ENCODE measurements at regions of chr13 and their contacts with region 1.

Region 1: DNA sequence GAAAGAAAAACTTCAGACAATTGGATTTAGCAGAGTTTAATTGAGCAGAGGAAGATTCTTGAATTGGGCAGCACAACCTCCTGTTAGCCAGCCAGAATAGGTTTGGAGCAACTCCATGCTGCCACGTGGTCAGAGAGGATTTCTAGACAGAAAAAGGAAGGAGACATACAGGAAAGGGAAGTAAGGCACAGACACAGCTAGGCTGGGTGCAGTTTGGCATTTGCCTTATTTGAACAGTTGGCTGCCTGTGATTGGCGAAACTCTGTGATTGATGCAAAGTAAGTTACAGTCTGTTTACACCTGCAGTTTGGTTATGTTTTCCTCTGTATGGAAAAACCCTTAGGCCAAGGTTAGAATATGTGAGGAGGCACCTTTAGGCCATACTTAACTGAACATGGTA is 85.8 kb upstream of the SPATA13 start:
- DNase-seq: peak in 4 of 6 donors; percentile 51 to 70 (median 52)
- ATAC-seq: peak; percentile 60 to 65 (median 62)
- H3K4me3 ChIP-seq: no peak overlapping the region
- H3K27ac ChIP-seq: peak overlapping the region; percentile 65 to 92 (median 78)
- H3K4me1 ChIP-seq: peaks cover 19 to 28% (median 27%) of the 10 kb centered on the region in 3 donors
- H3K27me3 ChIP-seq: no peaks in the 10 kb centered on the region
- CTCF ChIP-seq: no peak

Region 2: DNA sequence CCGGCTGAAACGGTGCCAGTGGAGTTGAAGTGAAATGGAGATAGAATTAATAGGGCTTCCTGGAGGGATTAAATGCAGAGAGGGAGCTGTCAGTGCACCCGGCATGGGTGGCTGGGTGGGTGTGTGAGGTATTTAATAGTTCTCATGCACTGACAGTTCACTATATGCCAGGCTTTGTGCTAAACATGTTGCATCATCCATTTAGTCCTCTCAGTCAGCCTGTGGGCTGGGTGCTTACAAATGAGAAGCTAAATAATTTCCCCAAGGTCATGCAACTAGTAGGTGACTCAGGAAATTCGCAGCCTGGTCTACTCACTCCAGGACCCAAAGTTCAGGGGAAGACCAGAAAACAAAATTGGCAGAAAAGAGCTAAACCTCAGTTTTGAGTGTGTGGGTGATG is 22.4 kb after region 1 on chr13:
- intact Hi-C with region 1: no loop called
- DNase-seq: peak in 1 of 6 donors; percentile 31
- ATAC-seq: peak; percentile 40 to 80 (median 66)
- H3K4me3 ChIP-seq: no peak overlapping the region
- H3K27ac ChIP-seq: no peak overlapping the region
- H3K4me1 ChIP-seq: no peaks in the 10 kb centered on the region
- H3K27me3 ChIP-seq: no peaks in the 10 kb centered on the region
- CTCF ChIP-seq: no peak

Region 3: GRCh38 chr13:24160454-24161009 is 85.8 kb after region 1 on chr13 and contains the start of gene SPATA13:
- intact Hi-C with region 1: loop called in 1 of 3 experiments (anchors 10 kb)
- DNase-seq: peak; percentile 94 to 99 (median 98)
- ATAC-seq: peak; percentile 81 to 92 (median 90)
- H3K4me3 ChIP-seq: peak within 1 kb of the TSS; percentile 84 to 100 (median 86)
- H3K27ac ChIP-seq: peak within 1 kb of the TSS; percentile 96 to 99 (median 98)
- H3K4me1 ChIP-seq: peaks cover 19 to 29% (median 21%) of the 10 kb centered on the region in 3 donors
- H3K27me3 ChIP-seq: no peaks in the 10 kb centered on the region
- CTCF ChIP-seq: no peak
- total RNA-seq, gene SPATA13: 38.1 to 65.7 (median 53.9) TPM